WTC11 (cell line): ENCODE measurements at regions of chr16 and their contacts with region 1.

Region 1: DNA sequence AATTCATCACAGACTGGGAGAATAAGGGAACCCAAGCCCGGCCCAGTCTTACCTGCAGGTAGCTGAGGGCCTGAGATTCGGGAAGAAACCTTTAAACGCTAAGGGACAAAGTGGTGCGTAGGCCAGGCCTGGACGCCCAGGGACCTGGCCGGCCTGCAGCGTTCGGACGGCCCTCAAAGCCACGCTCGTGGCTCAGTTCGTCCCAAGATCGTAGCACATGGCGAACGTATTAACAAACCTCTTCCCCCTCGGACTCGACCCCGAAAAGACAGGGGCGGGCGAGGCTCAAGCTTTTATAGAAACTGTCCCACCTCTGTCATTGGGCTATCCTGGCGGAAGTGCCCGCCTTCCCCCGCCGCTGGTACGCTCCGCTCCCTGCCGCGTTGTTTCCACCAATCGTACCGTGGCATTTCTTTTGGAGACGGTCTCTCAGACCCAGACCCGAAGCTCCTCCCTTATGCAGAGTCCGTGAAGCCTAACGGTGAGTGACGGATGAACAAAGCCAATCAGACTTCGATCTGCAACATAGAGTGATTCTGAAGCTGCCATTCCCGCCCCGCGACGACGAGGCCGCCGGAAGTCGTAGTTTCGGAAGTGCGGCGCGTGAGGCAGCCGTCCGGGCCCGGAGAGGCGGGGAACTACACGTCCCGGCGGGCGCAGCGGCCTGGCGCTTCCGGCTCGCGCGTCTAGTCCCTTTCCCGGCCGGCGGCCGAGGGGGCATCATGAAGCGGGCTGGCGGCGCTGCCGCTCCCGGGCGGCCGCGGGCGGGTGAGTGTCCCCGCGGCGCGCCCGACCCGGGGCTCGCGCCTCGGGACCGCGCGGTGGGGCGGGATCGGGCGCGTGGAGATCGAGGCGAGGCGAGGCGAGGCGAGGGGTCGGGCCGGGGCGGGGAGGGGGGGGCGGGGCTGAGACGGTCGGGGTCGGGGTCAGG is at the start of gene TRAF7:
- DNase-seq: peak; percentile 99
- ATAC-seq: peak; percentile 72
- H3K4me3 Mint-ChIP-seq: peak within 1 kb of the TSS; percentile 99
- H3K27ac Mint-ChIP-seq: peak within 1 kb of the TSS; percentile 94
- H3K4me1 Mint-ChIP-seq: peaks cover 50% of the 10 kb centered on the region
- H3K27me3 Mint-ChIP-seq: no peaks in the 10 kb centered on the region; the same call in 1 of the 2 replicates
- CTCF ChIP-seq: no peak
- total RNA-seq, gene TRAF7: 148 to 159 TPM (median 152 TPM) in 3 replicates

Region 2: DNA sequence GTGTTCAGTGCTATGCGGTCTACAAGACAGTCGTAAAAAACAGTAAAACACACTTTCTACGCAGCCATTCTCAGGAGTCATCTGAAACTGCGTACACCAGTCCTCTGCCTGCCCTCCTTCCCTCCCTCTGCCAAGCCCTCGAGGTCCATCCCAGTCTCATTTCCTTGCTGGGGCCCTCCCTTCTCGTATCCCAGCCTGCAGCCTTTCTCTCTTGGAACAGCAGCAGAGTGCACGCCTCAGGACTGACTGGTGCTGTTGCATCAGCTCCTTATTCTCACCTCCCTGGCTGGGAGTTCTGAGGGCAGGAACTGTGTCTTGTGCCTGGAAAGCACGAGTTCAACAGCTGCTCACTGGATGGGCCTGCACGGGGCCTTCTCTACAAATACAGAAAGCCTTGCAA is 315.8 kb before region 1 on chr16:
- CTCF ChIA-PET with region 1: no interaction called
- POLR2A ChIA-PET with region 1: no interaction called
- DNase-seq: no peak
- ATAC-seq: peak; percentile 30; the same call in 1 of the 2 replicates
- H3K4me3 Mint-ChIP-seq: no peak overlapping the region
- H3K27ac Mint-ChIP-seq: no peak overlapping the region
- H3K4me1 Mint-ChIP-seq: no peaks in the 10 kb centered on the region
- H3K27me3 Mint-ChIP-seq: peaks cover 13% of the 10 kb centered on the region
- CTCF ChIP-seq: no peak

Region 3: GRCh38 chr16:2175441-2175840 is 20.1 kb after region 1 on chr16:
- CTCF ChIA-PET with region 1: no interaction called
- POLR2A ChIA-PET with region 1: no interaction called
- DNase-seq: no peak
- ATAC-seq: no peak
- H3K4me3 Mint-ChIP-seq: no peak overlapping the region
- H3K27ac Mint-ChIP-seq: no peak overlapping the region
- H3K4me1 Mint-ChIP-seq: no peaks in the 10 kb centered on the region
- H3K27me3 Mint-ChIP-seq: no peaks in the 10 kb centered on the region
- CTCF ChIP-seq: no peak

Region 4: GRCh38 chr16:2213817-2214720 is 58.7 kb after region 1 on chr16:
- CTCF ChIA-PET with region 1: interaction called, 4 read pairs
- POLR2A ChIA-PET with region 1: interaction called, 10 read pairs
- DNase-seq: no peak
- ATAC-seq: no peak
- H3K4me3 Mint-ChIP-seq: peak overlapping the region; percentile 74
- H3K27ac Mint-ChIP-seq: peak overlapping the region; percentile 32; the same call in 1 of the 2 replicates
- H3K4me1 Mint-ChIP-seq: peaks cover 25% of the 10 kb centered on the region
- H3K27me3 Mint-ChIP-seq: no peaks in the 10 kb centered on the region
- CTCF ChIP-seq: no peak

Region 5: DNA sequence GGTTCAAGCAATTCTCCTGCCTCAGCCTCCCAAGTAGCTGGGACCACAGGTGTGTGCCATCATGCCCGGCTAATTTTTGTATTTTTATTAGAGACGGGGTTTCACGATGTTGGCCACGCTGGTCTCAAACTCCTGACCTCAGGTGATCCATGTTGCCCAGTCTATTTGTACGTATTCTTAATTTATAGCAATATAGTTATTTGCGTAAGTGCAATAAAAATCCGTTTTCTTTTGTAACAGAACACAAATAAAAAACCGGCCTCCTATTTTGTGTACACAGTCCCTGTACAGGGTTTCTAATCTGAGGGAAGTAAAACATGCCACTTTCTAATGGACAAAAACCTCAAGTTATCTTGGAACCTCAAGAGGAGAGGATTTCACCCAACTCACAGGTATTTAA is 104.9 kb after region 1 on chr16:
- CTCF ChIA-PET with region 1: no interaction called
- POLR2A ChIA-PET with region 1: no interaction called
- DNase-seq: no peak
- ATAC-seq: no peak
- H3K4me3 Mint-ChIP-seq: no peak overlapping the region
- H3K27ac Mint-ChIP-seq: no peak overlapping the region
- H3K4me1 Mint-ChIP-seq: peaks cover 8% of the 10 kb centered on the region
- H3K27me3 Mint-ChIP-seq: no peaks in the 10 kb centered on the region
- CTCF ChIP-seq: no peak